PC-3 (cell line): ENCODE measurements at regions of chr1 and their contacts with region 1.

Region 1: DNA sequence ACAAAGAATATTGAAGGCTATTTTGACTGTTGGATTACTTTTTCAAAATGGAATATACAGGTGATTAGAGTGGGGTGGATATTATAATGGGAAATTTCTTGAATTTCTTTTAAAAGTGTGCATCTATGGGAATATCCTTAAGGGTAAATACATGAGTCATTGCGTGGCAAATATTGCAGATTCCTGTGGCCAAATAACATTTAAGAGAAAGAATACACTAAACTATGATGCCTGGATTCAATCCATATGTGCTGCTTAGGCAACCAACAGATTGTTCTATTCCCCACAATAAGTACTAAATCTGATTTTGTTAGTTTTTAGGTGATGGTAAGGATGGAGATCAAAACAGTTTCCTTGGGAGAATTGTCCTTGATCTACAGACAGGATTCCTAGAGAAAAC is 119.5 kb downstream of the HMCN1 start:
- DNase-seq: peak; percentile 86
- ATAC-seq: peak; percentile 33
- H3K4me3 ChIP-seq: no peak overlapping the region
- H3K27ac ChIP-seq: peak overlapping the region; percentile 86
- H3K4me1 ChIP-seq: peaks cover 60% of the 10 kb centered on the region
- H3K27me3 ChIP-seq: no peaks in the 10 kb centered on the region
- CTCF ChIP-seq: no peak

Region 2: DNA sequence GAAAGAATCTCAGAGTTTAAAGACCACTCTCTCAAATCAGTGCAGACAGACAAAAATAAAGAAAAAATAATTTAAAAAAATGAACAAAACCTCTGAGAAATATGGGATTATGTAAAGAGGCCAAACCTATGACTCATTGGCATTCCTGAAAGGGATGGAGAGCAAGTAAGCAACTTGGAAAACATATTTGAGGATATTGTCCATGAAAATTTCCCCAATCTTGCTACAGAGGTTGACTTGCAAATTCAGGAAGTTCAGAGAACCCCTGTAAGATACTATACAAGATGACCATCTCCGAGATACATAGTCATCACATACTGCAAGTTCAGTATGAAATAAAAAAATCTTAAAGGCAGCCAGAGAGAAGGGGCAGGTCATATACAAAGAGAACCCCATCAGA is 493.0 kb before region 1 on chr1:
- CTCF ChIA-PET with region 1: no interaction called
- POLR2A ChIA-PET with region 1: interaction called, 12 read pairs
- intact Hi-C with region 1: no loop called
- DNase-seq: peak; percentile 37
- ATAC-seq: no peak; the same call in 1 of the 2 replicates
- H3K4me3 ChIP-seq: no peak overlapping the region
- H3K27ac ChIP-seq: no peak overlapping the region
- H3K4me1 ChIP-seq: no peaks in the 10 kb centered on the region
- H3K27me3 ChIP-seq: no peaks in the 10 kb centered on the region
- CTCF ChIP-seq: no peak

Region 3: DNA sequence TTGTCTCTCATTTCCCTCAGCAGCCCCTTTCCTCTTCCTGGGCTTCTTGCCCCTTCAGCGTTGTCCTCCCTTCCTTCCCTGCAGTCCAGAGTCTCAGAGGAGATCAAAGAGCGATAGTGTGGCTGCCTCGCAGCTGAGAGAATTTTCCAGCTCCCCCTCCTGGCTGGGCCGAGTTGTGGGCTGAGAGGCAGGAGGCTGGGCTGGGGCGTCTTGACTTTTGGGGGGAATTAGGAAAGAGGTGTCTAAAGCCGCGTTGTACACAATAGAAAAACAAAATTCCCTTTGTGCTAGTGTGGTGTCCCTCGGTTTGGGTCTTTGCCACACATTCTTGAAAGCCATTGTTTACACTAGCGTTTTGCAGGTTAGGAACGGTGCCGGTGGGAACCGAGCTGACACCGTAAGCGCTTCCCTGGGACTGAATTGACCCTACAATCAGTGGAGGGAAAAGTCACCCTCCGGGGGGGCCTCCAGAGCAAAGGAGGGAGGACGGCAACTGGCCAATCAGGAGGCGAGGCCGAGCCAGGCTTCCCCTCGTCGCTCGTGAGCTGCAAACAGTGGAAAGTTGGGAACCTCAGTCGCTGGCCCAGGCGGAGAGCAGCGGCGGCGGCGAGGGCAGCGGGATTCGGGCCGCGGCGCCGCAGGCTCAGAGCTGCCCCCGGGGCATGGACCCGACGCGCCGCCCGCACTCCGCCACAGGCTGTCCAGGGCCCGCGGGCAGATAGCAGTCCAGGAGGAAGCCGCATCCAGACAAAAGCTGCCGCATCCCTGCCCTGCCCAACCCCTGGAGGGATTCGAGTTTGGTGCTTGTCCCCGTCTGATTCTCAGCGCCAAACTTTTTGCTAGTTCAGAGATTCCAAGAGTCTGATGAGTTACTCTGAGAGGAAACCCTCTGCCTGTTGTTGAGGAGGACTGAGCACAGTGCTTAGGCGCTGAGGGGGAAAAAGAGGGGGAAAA is 119.6 kb before region 1 on chr1 and contains the start of gene HMCN1:
- CTCF ChIA-PET with region 1: no interaction called
- POLR2A ChIA-PET with region 1: no interaction called
- intact Hi-C with region 1: loop called (anchors 1 kb)
- DNase-seq: peak; percentile 47
- ATAC-seq: peak; percentile 81
- H3K4me3 ChIP-seq: peak within 1 kb of the TSS; percentile 80
- H3K27ac ChIP-seq: no peak within 1 kb of the TSS
- H3K4me1 ChIP-seq: peaks cover 13% of the 10 kb centered on the region; the same call in 1 of the 2 replicates
- H3K27me3 ChIP-seq: no peaks in the 10 kb centered on the region
- CTCF ChIP-seq: peak; percentile 59
- total RNA-seq, gene HMCN1: 0.66 and 3.3 TPM in 2 replicates

Region 4: DNA sequence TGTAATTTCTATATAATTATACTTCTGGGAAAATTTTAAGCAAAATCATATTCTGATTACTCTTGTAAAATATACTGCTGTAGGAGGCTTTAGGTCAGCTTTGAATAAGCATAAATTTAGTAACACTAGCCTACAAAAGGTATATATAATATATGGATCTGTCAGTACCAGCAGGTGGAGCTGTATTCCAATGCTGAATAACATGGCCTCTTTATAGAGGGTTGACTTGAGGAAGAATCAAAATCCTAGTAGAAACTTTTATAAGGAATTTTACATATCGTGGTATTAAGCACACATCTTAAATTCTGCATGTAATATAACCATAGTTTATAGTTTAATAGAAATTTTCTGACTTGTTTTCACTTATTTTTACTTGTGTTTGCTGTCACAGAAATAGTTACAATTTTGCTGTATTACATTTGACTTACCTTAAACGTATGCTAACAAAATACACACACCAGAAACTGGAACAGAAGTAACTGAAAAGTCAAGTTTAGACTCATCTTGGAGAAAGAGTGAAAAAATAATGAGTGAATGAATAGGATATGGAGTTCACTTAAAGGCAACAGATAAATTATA is 40.2 kb before region 1 on chr1:
- CTCF ChIA-PET with region 1: no interaction called
- POLR2A ChIA-PET with region 1: no interaction called
- intact Hi-C with region 1: loop called (anchors 5 kb)
- DNase-seq: peak; percentile 73
- ATAC-seq: peak; percentile 84
- H3K4me3 ChIP-seq: no peak overlapping the region
- H3K27ac ChIP-seq: no peak overlapping the region
- H3K4me1 ChIP-seq: no peaks in the 10 kb centered on the region
- H3K27me3 ChIP-seq: no peaks in the 10 kb centered on the region
- CTCF ChIP-seq: peak; percentile 70

Region 5: DNA sequence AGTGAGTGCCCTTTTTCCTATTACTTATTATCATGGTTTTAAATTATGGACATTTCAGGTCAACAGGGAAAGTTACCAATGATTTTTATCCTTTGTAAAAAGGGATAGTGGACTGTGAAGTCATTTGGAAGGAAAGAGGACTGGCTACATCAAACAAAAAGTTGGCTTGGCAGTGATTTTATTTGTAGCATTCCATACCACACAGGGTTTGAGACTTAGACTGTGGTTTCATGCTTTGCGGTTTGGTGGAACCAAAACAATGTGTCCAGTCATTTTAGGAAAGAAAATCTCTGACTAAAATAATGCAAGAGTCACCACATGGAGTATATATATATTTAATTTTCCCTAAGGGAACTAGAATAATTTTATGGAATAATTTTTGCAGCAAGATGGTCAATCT is 119.9 kb after region 1 on chr1:
- CTCF ChIA-PET with region 1: no interaction called
- POLR2A ChIA-PET with region 1: interaction called, 13 read pairs
- intact Hi-C with region 1: no loop called
- DNase-seq: peak; percentile 86
- ATAC-seq: peak; percentile 88
- H3K4me3 ChIP-seq: no peak overlapping the region
- H3K27ac ChIP-seq: no peak overlapping the region
- H3K4me1 ChIP-seq: peaks cover 36% of the 10 kb centered on the region
- H3K27me3 ChIP-seq: no peaks in the 10 kb centered on the region
- CTCF ChIP-seq: no peak

Region 6: DNA sequence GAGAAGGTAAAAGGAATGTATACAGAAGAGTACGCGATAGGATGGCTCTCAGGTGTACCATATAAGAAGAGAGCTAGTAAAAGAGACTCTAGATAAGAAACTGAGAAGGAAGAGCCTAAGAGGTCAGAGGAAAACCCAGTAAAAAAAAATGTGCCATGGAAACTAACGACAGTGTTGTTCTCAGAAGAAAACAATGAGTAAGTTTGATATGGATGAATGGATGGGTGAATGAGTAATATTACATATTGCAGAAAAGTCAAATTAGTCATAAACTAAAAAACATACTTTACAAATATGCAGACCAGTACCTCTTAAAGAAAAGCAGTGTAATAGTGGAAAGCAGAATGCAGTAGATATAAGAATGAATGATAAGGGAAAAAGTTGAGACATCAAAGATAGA is 196.6 kb after region 1 on chr1:
- CTCF ChIA-PET with region 1: no interaction called
- POLR2A ChIA-PET with region 1: no interaction called
- intact Hi-C with region 1: loop called (anchors 5 kb)
- DNase-seq: peak; percentile 79
- ATAC-seq: peak; percentile 84
- H3K4me3 ChIP-seq: no peak overlapping the region
- H3K27ac ChIP-seq: peak overlapping the region; percentile 74
- H3K4me1 ChIP-seq: peaks cover 18% of the 10 kb centered on the region
- H3K27me3 ChIP-seq: no peaks in the 10 kb centered on the region
- CTCF ChIP-seq: no peak

Region 7: DNA sequence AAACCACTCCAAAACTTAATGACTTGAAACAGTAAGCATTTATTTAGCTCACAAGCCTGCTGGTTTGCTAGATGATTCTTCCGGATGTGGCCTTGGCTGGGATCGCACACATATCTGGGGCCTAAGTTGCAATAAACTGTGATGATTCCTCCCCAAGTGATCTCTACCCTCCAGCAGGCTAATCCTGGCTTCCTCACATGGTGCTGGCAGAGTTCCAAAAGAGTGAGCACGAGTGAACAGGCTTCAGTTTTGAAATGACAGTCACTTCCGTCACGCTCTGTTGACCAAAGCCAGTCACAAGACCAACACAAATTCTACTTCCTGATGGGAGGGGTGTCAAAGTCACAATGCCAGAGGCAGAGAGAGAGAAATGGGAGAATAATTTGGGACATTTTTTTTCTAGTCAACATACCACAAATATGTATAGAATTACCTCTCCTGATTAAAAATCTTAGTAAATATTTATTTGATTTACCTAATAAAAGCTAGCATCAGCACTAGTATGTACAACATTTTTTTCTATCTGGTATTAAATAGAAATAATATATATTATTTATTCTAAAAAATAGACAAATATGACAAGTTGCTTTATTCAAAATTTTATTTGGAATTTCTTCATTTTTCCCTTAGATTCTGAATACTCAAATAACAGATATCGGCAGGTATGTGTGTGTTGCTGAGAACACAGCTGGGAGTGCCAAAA is 228.6 kb after region 1 on chr1:
- CTCF ChIA-PET with region 1: no interaction called
- POLR2A ChIA-PET with region 1: no interaction called
- intact Hi-C with region 1: loop called (anchors 5 kb)
- DNase-seq: peak; percentile 96
- ATAC-seq: peak; percentile 96
- H3K4me3 ChIP-seq: no peak overlapping the region
- H3K27ac ChIP-seq: peak overlapping the region; percentile 60
- H3K4me1 ChIP-seq: peaks cover 23% of the 10 kb centered on the region
- H3K27me3 ChIP-seq: no peaks in the 10 kb centered on the region
- CTCF ChIP-seq: no peak